ENCODE measurements at regions of chr4 and their contacts with region 1.

Region 1: DNA sequence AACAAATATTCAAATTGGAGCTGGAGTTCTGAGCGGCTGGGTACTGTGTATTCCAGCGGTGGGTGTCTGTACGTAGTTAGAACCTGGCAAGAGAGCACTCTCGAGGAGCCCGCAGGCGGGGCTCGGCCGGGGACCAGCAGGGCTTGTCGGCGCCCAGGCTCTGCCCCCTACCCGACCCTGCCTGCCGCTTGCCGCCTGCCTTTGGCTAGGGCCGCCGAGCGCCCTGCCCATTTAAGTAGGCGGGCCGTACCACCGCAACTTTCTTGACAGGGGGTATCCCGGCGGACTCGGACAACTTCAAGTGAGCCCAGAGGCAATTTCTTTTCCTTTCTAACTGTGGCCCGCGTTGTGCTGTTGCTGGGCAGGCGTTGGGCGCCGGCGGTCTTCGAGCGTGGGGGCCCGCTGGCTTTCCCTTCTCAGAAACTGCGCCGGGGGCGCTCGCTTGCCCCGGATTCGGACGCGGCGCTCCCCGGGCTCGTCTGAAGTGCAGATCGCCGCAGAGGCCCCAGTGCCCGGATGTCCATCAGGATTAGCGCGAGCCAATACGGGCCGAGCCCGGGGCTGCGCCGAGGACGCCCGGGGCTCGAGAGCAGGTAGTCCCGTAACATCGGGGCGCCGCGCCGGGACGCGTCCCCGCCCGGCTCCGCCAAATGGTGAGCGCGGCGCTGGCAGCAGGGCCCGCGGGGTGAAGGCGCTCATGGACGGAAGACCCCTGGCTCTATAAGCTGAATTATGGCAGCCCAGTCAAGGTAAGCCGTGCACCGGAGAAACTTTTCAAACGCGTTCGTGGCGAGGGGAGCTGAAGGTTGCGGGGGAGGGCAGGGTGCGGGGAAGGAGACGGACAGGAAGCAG is 72.1 kb downstream of the AFF1 start:
- DNase-seq: peak; percentile 83 to 95 (median 89)
- ATAC-seq: peak; percentile 81
- H3K4me3 ChIP-seq: peak overlapping the region; percentile 75 to 91
- H3K4me3 Mint-ChIP-seq: peak overlapping the region; percentile 91
- H3K27ac ChIP-seq: peak overlapping the region; percentile 83 to 95
- H3K27ac Mint-ChIP-seq: peak overlapping the region; percentile 96
- H3K4me1 ChIP-seq: peaks cover 43% of the 10 kb centered on the region
- H3K4me1 Mint-ChIP-seq: peaks cover 53% of the 10 kb centered on the region
- H3K27me3 ChIP-seq: no peaks in the 10 kb centered on the region
- H3K27me3 Mint-ChIP-seq: no peaks in the 10 kb centered on the region
- CTCF ChIP-seq: no peak

Region 2: DNA sequence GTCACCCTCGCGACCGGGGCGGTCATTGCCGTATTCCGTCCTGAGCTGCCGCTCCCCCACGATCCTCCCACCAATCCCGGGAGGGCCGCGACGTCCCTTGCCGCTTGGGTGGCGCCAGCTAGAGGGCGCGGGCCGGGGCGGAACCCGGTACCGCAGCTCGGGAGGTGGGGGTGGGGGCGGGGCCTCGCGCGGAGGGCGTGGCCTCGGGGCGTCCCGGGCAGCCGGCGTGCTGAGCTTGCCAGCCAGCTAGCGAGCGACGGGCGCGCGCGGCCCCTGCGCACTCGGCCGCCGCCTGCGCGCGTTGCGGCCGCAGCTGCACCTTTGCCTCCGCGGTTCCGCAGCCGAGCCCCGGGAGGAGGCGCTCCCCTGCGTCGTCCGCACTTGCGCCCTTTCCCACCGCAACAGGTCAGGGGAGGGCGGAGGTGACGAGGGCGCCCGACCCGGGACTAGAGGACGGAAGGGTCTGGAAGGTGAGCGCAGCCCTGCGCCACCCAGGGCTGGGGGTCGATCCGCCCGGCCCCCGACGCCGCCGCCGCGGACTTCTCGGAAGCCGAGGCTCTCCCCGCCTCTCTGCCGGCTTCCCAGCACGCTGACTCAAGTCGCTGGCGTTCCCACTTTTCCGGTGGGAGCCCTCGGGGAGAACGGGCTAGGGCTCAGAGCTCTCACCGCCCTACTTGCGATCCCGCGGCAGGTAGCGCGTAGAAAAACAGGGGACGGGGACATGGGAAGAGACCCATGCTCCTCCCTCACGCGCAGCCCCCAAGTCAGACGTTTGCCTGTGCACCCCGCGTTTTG is 71.9 kb before region 1 on chr4 and contains the start of gene AFF1:
- CTCF ChIA-PET with region 1: interaction called, 39 read pairs
- POLR2A ChIA-PET with region 1: interaction called, 148 read pairs
- intact Hi-C with region 1: loop called (anchors 1 kb)
- DNase-seq: peak; percentile 74 to 97 (median 85)
- ATAC-seq: peak; percentile 71
- H3K4me3 ChIP-seq: peak within 1 kb of the TSS; percentile 76 to 87
- H3K4me3 Mint-ChIP-seq: peak within 1 kb of the TSS; percentile 88
- H3K27ac ChIP-seq: peak within 1 kb of the TSS; percentile 81 to 85
- H3K27ac Mint-ChIP-seq: peak within 1 kb of the TSS; percentile 95
- H3K4me1 ChIP-seq: peaks cover 42% of the 10 kb centered on the region
- H3K4me1 Mint-ChIP-seq: peaks cover 50% of the 10 kb centered on the region
- H3K27me3 ChIP-seq: no peaks in the 10 kb centered on the region
- H3K27me3 Mint-ChIP-seq: no peaks in the 10 kb centered on the region
- CTCF ChIP-seq: peak; percentile 44
- total RNA-seq, gene AFF1: 32.3 to 33.8 TPM

Region 3: GRCh38 chr4:86977621-86978184 is 29.2 kb before region 1 on chr4:
- CTCF ChIA-PET with region 1: no interaction called
- POLR2A ChIA-PET with region 1: no interaction called
- intact Hi-C with region 1: no loop called
- DNase-seq: no peak
- ATAC-seq: peak; percentile 57
- H3K4me3 ChIP-seq: no peak overlapping the region
- H3K4me3 Mint-ChIP-seq: no peak overlapping the region
- H3K27ac ChIP-seq: no peak overlapping the region
- H3K27ac Mint-ChIP-seq: peak overlapping the region; percentile 45
- H3K4me1 ChIP-seq: peaks cover 7% of the 10 kb centered on the region
- H3K4me1 Mint-ChIP-seq: peaks cover 55% of the 10 kb centered on the region
- H3K27me3 ChIP-seq: no peaks in the 10 kb centered on the region
- H3K27me3 Mint-ChIP-seq: no peaks in the 10 kb centered on the region
- CTCF ChIP-seq: no peak

Region 4: GRCh38 chr4:87073199-87074120 is 66.6 kb after region 1 on chr4:
- CTCF ChIA-PET with region 1: no interaction called
- POLR2A ChIA-PET with region 1: no interaction called
- intact Hi-C with region 1: loop called (anchors 5 kb)
- DNase-seq: peak; percentile 2 to 72 (median 47)
- ATAC-seq: peak; percentile 96
- H3K4me3 ChIP-seq: peak overlapping the region; percentile 13 to 26
- H3K4me3 Mint-ChIP-seq: peak overlapping the region; percentile 69
- H3K27ac ChIP-seq: peak overlapping the region in 1 of 2 experiments; percentile 21
- H3K27ac Mint-ChIP-seq: peak overlapping the region; percentile 56
- H3K4me1 ChIP-seq: peaks cover 18% of the 10 kb centered on the region
- H3K4me1 Mint-ChIP-seq: peaks cover 36% of the 10 kb centered on the region
- H3K27me3 ChIP-seq: no peaks in the 10 kb centered on the region
- H3K27me3 Mint-ChIP-seq: no peaks in the 10 kb centered on the region
- CTCF ChIP-seq: no peak

Region 5: DNA sequence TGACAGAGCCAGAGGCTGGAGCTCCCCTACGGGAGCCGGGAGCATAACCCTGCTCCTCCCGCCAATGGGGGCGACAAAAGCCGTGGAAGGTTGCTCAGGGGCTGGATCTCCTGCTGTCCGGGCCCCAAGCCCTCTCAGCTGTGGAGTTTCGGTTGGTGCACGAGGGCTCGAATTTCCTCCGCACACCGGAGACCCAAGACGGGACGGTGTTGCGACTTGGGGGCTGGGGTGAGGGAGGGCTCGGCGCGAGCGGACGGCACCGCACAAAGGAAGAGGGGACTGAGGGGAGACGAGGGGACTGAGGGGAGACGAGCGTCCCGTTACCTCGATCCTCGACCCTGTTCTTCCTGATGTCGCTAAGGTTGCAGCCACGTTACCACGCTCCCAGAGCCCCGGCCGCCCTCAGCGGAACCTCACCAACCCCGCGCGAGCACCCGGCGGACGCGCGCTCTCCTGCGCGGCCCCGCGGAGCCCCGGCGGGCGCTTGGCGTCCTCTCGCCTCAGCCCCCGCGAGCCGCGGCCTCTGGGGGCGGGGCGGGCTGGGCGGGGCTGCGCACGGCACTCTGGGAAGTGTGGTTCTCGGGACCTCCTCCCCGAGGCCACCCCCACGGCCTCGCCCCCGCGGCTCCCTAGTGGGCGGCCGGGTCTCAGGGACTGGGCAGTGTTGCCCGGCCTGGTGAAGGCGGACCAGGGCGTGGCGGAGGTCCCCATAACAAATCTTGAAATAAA is 213.4 kb after region 1 on chr4 and contains the start of gene KLHL8:
- CTCF ChIA-PET with region 1: no interaction called
- POLR2A ChIA-PET with region 1: interaction called, 12 read pairs
- intact Hi-C with region 1: loop called (anchors 1 to 2 kb)
- DNase-seq: peak; percentile 75 to 94 (median 85)
- ATAC-seq: peak; percentile 90
- H3K4me3 ChIP-seq: peak within 1 kb of the TSS; percentile 91 to 99
- H3K4me3 Mint-ChIP-seq: peak within 1 kb of the TSS; percentile 94
- H3K27ac ChIP-seq: peak within 1 kb of the TSS; percentile 86 to 92
- H3K27ac Mint-ChIP-seq: peak within 1 kb of the TSS; percentile 91
- H3K4me1 ChIP-seq: peaks cover 9% of the 10 kb centered on the region
- H3K4me1 Mint-ChIP-seq: peaks cover 18% of the 10 kb centered on the region
- H3K27me3 ChIP-seq: no peaks in the 10 kb centered on the region
- H3K27me3 Mint-ChIP-seq: no peaks in the 10 kb centered on the region
- CTCF ChIP-seq: peak; percentile 39
- total RNA-seq, gene KLHL8: 8.2 to 8.7 TPM

Region 6: GRCh38 chr4:87442889-87443288 is 436.0 kb after region 1 on chr4:
- CTCF ChIA-PET with region 1: no interaction called
- POLR2A ChIA-PET with region 1: no interaction called
- intact Hi-C with region 1: no loop called
- DNase-seq: no peak
- ATAC-seq: no peak
- H3K4me3 ChIP-seq: no peak overlapping the region
- H3K4me3 Mint-ChIP-seq: no peak overlapping the region
- H3K27ac ChIP-seq: no peak overlapping the region
- H3K27ac Mint-ChIP-seq: no peak overlapping the region
- H3K4me1 ChIP-seq: no peaks in the 10 kb centered on the region
- H3K4me1 Mint-ChIP-seq: no peaks in the 10 kb centered on the region
- H3K27me3 ChIP-seq: no peaks in the 10 kb centered on the region
- H3K27me3 Mint-ChIP-seq: no peaks in the 10 kb centered on the region
- CTCF ChIP-seq: no peak

Region 7: DNA sequence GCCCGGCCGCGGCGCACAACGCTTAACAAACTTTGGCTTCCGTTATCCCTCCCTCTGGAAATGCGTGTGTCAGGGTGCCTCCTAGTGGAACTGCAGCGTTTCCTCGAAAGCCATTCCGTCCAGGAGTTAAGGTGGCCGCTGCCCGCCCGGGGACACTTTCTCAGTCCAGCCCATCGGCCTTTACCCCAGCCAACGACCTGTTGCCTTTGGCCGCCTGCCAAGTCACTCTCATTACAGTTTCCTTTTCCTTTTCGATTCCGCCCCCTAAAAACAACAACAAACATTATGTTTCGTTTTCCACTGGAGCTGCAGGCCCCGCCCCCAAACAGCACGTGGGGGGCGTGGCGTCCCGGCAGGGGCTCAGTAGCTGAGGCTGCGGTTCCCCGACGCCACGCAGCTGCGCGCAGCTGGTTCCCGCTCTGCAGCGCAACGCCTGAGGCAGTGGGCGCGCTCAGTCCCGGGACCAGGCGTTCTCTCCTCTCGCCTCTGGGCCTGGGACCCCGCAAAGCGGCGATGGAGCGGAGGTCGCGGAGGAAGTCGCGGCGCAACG is 1449.9 kb after region 1 on chr4 and contains the start of gene HERC5:
- CTCF ChIA-PET with region 1: no interaction called
- POLR2A ChIA-PET with region 1: no interaction called
- intact Hi-C with region 1: loop called in 1 of 2 experiments (anchors 10 kb)
- DNase-seq: peak; percentile 83 to 96 (median 91)
- ATAC-seq: peak; percentile 95
- H3K4me3 ChIP-seq: peak within 1 kb of the TSS; percentile 79 to 87
- H3K4me3 Mint-ChIP-seq: peak within 1 kb of the TSS; percentile 100
- H3K27ac ChIP-seq: peak within 1 kb of the TSS; percentile 63 to 74
- H3K27ac Mint-ChIP-seq: peak within 1 kb of the TSS; percentile 100
- H3K4me1 ChIP-seq: peaks cover 13% of the 10 kb centered on the region
- H3K4me1 Mint-ChIP-seq: peaks cover 33% of the 10 kb centered on the region
- H3K27me3 ChIP-seq: no peaks in the 10 kb centered on the region
- H3K27me3 Mint-ChIP-seq: no peaks in the 10 kb centered on the region
- CTCF ChIP-seq: no peak
- total RNA-seq, gene HERC5: 13.2 to 13.5 TPM

Measured in CD8-positive, alpha-beta T cell (primary cell).